ENCODE measurements at regions of chr3 and their contacts with region 1.

Region 1: DNA sequence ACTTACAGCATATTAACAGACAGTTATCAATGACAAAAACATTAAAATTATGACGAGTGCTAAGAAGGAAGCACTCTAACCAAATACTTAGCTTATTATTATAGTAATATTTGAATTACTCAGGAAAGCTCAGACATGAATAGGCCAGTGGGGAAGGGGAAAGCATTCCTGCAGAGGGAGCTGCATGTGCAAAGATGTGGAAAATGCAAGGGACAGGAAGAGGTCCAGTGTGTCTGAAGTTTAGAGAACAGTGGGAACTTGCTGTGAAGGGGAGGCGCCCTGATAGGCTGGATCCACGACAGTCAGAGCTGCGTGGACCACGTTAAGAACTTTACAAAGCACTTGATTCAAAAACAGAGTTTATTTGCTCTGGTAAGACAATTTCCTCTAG is 1.2 kb upstream of the SPICE1 start:
- DNase-seq: peak in 1 of 3 donors; percentile 11
- H3K4me3 ChIP-seq: peak overlapping the region in 2 of 3 experiments; percentile 95 to 99
- H3K4me3 Mint-ChIP-seq: no peak overlapping the region
- H3K27ac ChIP-seq: peak overlapping the region in 1 of 2 donors; percentile 84
- H3K27ac Mint-ChIP-seq: peak overlapping the region in 1 of 7 donors; percentile 88
- H3K4me1 ChIP-seq: peaks cover 16 to 27% of the 10 kb centered on the region in 2 donors
- H3K4me1 Mint-ChIP-seq: peaks cover 11% of the 10 kb centered on the region
- H3K27me3 ChIP-seq: peaks cover 0 to 5% of the 10 kb centered on the region in 2 donors
- H3K27me3 Mint-ChIP-seq: peaks cover 0 to 2% (median 2%) of the 10 kb centered on the region in 3 donors
- CTCF ChIP-seq: no peak

Region 2: GRCh38 chr3:113614402-113614801 is 98.3 kb after region 1 on chr3:
- intact Hi-C with region 1: no loop called
- DNase-seq: peak; percentile 19 to 43 (median 27)
- H3K4me3 ChIP-seq: peak overlapping the region in 1 of 3 experiments; percentile 31
- H3K4me3 Mint-ChIP-seq: no peak overlapping the region
- H3K27ac ChIP-seq: peak overlapping the region in 1 of 2 donors; percentile 39
- H3K27ac Mint-ChIP-seq: peak overlapping the region in 6 of 7 donors; percentile 27 to 68 (median 49)
- H3K4me1 ChIP-seq: peaks cover 14 to 21% of the 10 kb centered on the region in 2 donors
- H3K4me1 Mint-ChIP-seq: peaks cover 19% of the 10 kb centered on the region
- H3K27me3 ChIP-seq: no peaks in the 10 kb centered on the region
- H3K27me3 Mint-ChIP-seq: peaks cover 0 to 2% (median 0%) of the 10 kb centered on the region in 3 donors
- CTCF ChIP-seq: no peak

Region 3: DNA sequence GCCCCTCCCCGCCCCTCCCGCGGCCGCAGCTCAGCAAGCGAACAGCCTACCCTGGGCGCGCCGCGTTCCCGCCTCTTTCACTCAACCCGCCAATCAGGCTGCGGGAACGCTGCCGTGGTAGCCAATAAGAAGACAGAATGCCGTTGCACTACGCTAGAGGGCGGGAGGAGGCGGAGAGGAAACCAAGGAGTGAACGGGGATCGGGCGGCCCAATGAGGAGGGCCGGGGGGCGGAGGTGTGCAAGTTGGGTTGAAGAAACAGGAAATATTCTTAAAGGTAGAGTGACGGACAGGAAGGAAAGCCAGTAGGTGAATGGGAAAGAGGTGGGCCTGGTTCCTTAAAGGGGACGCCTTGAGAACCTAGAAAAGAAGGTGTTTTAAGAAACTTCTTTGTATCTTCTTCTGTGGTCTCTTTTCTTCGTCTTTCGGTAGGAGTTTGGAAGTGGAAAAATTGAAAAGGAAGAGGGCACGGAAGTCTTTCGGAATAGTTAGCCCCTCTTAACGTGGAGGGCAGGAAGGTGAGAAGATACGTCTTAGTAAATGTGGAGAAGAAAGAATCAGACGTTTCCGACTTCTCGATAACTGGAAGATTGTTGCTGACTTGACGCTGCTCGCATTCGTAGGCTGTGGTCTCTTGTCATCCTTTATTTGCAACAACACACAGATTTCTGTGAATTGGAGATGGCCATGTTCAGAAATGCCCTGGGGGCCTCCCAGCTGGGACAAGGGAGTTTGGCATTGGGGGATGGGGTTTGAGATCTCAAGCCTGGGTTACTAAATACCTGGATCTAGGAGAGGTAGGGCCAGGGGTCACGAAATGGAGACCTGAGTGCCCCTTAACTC is 180.8 kb after region 1 on chr3:
- intact Hi-C with region 1: loop called in 1 of 2 experiments (anchors 5 kb)
- DNase-seq: peak; percentile 95 to 98 (median 97)
- H3K4me3 ChIP-seq: peak overlapping the region; percentile 77 to 100 (median 99)
- H3K4me3 Mint-ChIP-seq: no peak overlapping the region
- H3K27ac ChIP-seq: peak overlapping the region; percentile 42 to 94
- H3K27ac Mint-ChIP-seq: no peak overlapping the region
- H3K4me1 ChIP-seq: peaks cover 20 to 34% of the 10 kb centered on the region in 2 donors
- H3K4me1 Mint-ChIP-seq: peaks cover 27% of the 10 kb centered on the region
- H3K27me3 ChIP-seq: no peaks in the 10 kb centered on the region
- H3K27me3 Mint-ChIP-seq: peaks cover 3 to 15% (median 11%) of the 10 kb centered on the region in 3 donors
- CTCF ChIP-seq: no peak

Measured in CD14-positive monocyte (primary cell).